Kidney (tissue), 22 donors: ENCODE measurements at regions of chr2 and their contacts with region 1.

Region 1: DNA sequence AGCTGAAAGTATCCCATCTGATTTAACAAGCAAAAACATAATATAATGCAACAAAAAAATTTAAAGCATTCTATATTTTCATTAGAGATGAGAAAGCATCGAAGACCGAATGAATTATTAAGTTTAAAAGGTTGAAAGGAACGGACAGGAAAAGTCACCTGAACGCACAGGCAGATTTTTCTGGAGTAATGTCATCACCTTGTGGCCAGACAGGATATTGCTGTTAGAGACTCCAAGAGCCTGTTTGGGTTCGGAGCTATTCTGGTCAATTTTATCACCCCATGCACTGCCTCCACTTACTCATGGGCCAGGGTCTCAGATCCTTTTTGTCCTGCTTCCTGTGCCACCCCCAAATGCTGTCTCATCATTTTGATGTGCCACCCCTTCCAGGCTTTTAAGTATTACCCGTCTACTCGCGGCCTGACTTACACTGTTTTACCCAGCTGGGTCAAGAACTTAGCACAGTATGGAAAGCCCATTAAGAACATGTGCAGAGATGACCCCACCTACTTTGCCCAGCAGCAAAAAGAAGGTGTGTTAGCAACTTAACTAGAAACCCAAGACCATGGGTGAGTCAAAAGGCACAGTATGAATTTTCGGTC is 27.3 kb downstream of the GKN2 start:
- DNase-seq: peak in 3 of 5 donors; percentile 29 to 76 (median 66)
- H3K4me3 ChIP-seq: no peak overlapping the region
- H3K27ac ChIP-seq: no peak overlapping the region
- H3K4me1 ChIP-seq: no peaks in the 10 kb centered on the region
- H3K27me3 ChIP-seq: no peaks in the 10 kb centered on the region
- CTCF ChIP-seq: peak; percentile 82

Region 2: GRCh38 chr2:68715353-68716041 is 209.9 kb before region 1 on chr2:
- intact Hi-C with region 1: loop called (anchors 10 kb)
- DNase-seq: peak; percentile 49 to 74 (median 65)
- H3K4me3 ChIP-seq: no peak overlapping the region
- H3K27ac ChIP-seq: no peak overlapping the region
- H3K4me1 ChIP-seq: peaks cover 0 to 2% (median 0%) of the 10 kb centered on the region in 3 donors
- H3K27me3 ChIP-seq: no peaks in the 10 kb centered on the region
- CTCF ChIP-seq: peak; percentile 63

Region 3: DNA sequence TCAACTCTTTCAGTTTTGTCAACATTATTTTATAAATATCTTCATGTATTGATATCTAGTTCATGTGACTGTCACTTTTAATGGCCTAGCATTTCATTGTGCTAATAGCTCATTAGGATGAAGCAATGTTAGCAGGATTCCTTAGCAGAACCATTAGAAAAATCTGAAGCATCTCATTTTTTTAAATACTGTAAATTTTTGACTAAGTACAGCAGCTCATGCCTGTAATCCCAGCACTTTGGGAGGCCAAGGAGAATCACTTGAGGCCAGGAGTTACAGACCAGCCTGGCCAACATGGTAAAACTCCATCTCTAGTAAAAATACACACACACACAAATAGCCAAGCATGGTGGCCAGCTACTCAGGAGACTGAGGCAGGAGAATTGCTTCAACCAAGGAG is 72.0 kb after region 1 on chr2:
- intact Hi-C with region 1: no loop called
- DNase-seq: no peak
- H3K4me3 ChIP-seq: no peak overlapping the region
- H3K27ac ChIP-seq: no peak overlapping the region
- H3K4me1 ChIP-seq: no peaks in the 10 kb centered on the region
- H3K27me3 ChIP-seq: no peaks in the 10 kb centered on the region
- CTCF ChIP-seq: no peak